Psoas muscle (tissue), 8 donors: ENCODE measurements at regions of chr17 and their contacts with region 1.

Region 1: DNA sequence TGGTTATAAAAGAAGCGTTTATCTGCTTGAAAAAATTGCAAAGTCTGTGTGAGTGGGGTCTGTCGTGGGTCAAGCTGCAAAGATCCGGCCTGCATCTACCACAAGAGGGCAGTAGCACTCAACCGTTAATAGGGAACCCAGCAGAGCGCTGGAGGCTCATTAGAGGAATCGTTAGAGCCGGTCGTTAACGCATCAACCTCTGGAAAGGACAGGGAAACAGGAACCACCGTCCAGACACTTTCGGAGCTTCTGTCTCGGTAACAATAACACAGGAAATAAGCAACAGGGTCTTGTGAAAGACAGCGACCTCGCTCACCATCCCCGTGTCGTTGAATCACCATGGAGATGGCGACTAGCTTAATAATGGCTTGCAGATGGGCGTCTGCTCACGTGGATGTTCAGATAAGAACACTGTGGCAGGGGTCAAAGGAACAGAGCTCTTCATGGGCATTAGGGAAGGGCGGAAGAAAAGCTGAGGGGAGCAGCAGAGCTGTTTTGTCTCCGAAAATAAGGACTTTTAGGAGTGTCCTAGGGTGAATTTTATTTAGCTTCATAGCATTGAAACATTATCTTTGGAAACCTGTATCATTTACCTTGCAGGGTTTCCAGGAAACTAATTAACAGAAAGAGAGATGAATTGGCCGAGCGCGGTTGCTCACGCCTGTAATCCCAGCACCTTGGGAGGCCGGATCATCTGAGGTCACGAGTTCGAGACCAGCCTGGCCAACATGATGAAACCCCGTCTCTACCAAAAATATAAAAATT is 11.9 kb upstream of the NSRP1 start:
- DNase-seq: peak; percentile 64 to 72
- ATAC-seq: peak; percentile 86 to 98 (median 93)
- H3K4me3 ChIP-seq: peak overlapping the region; percentile 59
- H3K27ac ChIP-seq: no peak overlapping the region
- H3K4me1 ChIP-seq: no peaks in the 10 kb centered on the region
- H3K27me3 ChIP-seq: peaks cover 0 to 3% (median 0%) of the 10 kb centered on the region in 3 donors
- CTCF ChIP-seq: peak; percentile 85

Region 2: DNA sequence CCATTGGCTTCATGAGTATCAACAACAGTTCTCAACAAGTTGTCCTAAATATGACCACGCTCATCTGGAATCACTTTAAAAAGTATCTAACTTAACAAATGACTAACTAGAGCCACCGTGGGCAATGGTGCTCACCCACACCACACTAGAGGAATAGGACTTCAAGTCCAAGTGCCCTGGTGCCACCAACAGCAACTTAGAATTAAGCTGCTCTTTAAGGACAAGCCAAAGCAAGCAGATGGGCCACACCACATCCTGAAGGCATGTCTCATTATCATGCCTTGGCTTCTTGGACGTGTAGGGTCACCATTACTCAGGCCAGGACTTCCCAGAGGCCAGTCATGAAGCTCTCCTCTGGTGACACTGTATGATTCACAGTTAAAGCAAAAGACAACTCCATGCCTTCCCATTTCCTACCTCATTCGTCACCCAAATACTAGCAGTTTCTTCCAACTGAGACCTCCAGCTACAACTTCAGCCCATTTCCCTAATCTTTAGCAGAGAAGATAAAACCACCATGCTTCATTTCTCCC is 140.2 kb after region 1 on chr17:
- intact Hi-C with region 1: no loop called
- DNase-seq: no peak
- ATAC-seq: peak in 1 of 4 donors; percentile 68
- H3K4me3 ChIP-seq: no peak overlapping the region
- H3K27ac ChIP-seq: no peak overlapping the region
- H3K4me1 ChIP-seq: peaks cover 9% of the 10 kb centered on the region
- H3K27me3 ChIP-seq: peaks cover 0 to 2% (median 0%) of the 10 kb centered on the region in 3 donors
- CTCF ChIP-seq: no peak

Region 3: DNA sequence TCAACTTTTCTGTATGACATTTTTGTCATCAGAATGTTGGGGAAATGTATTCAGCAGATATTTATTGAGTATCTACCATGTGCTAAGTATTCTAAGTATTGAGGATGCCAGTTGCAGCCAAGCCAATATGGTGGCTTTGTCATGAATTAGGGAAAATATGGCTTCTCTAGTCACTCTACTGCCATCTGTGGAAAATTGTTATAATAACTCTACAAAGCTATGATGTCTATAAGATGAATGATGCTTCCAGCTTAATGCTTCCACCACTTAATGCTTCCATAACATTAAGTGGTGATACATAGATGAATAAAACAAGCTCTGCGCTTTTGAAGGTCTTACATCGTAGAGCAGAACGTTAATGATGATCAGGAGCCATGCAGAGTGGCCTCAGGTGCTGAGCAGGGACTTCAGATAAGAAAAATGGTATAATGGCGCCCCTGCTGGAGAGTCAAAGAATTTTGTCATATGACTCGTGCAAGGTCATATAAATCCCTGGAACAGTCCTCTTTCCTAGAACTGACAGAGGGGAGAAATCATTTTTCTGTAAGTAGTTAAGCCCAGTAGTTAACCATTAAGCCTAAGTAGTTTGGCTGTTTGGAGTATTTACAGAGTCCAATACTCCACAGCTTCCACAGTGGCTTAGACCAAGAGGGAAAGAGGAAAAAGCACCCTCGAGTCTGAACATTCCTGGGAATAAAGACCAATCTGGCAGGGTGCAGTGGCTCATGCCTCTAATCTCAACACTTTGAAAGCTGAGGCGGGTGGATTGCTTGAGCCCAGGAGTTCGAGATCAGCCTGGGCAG is 231.8 kb after region 1 on chr17:
- intact Hi-C with region 1: loop called in 1 of 2 experiments (anchors 5 kb)
- DNase-seq: no peak
- ATAC-seq: no peak
- H3K4me3 ChIP-seq: no peak overlapping the region
- H3K27ac ChIP-seq: no peak overlapping the region
- H3K4me1 ChIP-seq: no peaks in the 10 kb centered on the region
- H3K27me3 ChIP-seq: peaks cover 0 to 4% (median 0%) of the 10 kb centered on the region in 3 donors
- CTCF ChIP-seq: peak; percentile 44